ENCODE measurements at regions of chr12 and their contacts with region 1.

Region 1: GRCh38 chr12:24991209-24992049 is 42.5 kb upstream of the BCAT1 start:
- DNase-seq: no peak
- ATAC-seq: peak; percentile 71
- H3K4me3 Mint-ChIP-seq: no peak overlapping the region
- H3K27ac Mint-ChIP-seq: no peak overlapping the region
- H3K4me1 Mint-ChIP-seq: no peaks in the 10 kb centered on the region
- H3K27me3 Mint-ChIP-seq: no peaks in the 10 kb centered on the region
- CTCF ChIP-seq: peak; percentile 67

Region 2: DNA sequence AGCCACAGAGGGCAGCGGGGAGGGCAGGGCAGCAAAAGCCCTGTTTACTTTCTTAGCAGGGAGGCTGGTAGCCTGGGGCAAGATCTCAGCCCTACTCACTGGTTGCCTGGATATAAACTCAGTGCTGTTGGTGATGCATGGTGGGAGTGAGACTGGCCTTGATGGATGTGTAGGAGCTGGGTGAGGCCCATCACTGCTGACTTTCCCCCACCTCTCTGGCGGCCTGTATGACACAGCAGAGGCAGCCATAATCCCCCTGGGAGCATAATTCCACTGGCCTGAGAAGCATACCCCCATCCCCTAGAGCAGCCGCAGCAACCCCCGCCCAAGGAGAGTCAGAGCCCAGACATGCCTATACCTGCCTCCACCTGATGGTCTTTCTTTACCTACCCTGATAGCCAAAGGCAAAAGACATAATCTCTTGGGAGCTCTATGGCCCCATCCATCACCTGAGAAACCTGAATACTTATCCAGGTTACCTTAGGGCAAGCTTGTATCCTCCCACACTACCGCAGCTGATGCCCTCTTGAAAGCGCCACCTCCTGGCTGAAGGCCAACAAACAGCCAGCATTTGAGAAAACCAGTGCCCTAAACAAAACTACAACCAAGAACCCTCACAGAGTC is 144.2 kb after region 1 on chr12:
- CTCF ChIA-PET with region 1: interaction called, 19 read pairs
- POLR2A ChIA-PET with region 1: no interaction called
- DNase-seq: peak; percentile 54
- ATAC-seq: peak; percentile 90
- H3K4me3 Mint-ChIP-seq: no peak overlapping the region
- H3K27ac Mint-ChIP-seq: no peak overlapping the region
- H3K4me1 Mint-ChIP-seq: peaks cover 16% of the 10 kb centered on the region
- H3K27me3 Mint-ChIP-seq: no peaks in the 10 kb centered on the region
- CTCF ChIP-seq: no peak

Region 3: GRCh38 chr12:25156061-25156460 is 164.6 kb after region 1 on chr12:
- CTCF ChIA-PET with region 1: interaction called, 12 read pairs
- POLR2A ChIA-PET with region 1: no interaction called
- DNase-seq: no peak
- ATAC-seq: no peak
- H3K4me3 Mint-ChIP-seq: no peak overlapping the region
- H3K27ac Mint-ChIP-seq: no peak overlapping the region
- H3K4me1 Mint-ChIP-seq: peaks cover 26% of the 10 kb centered on the region
- H3K27me3 Mint-ChIP-seq: no peaks in the 10 kb centered on the region
- CTCF ChIP-seq: no peak

Region 4: GRCh38 chr12:25518512-25518911 is 527.1 kb after region 1 on chr12:
- CTCF ChIA-PET with region 1: no interaction called
- POLR2A ChIA-PET with region 1: interaction called, 11 read pairs
- DNase-seq: no peak
- ATAC-seq: no peak
- H3K4me3 Mint-ChIP-seq: no peak overlapping the region
- H3K27ac Mint-ChIP-seq: no peak overlapping the region
- H3K4me1 Mint-ChIP-seq: no peaks in the 10 kb centered on the region
- H3K27me3 Mint-ChIP-seq: no peaks in the 10 kb centered on the region; the same call in 1 of the 2 replicates
- CTCF ChIP-seq: no peak

Measured in WTC11 (cell line).